ENCODE measurements at regions of chr3 and their contacts with region 1.

Region 1: GRCh38 chr3:194769020-194769643 is 83.4 kb downstream of the FAM43A start:
- DNase-seq: peak; percentile 92

Region 2: GRCh38 chr3:194814878-194815357 is 45.8 kb after region 1 on chr3:
- intact Hi-C with region 1: no loop called
- DNase-seq: no peak

Region 3: DNA sequence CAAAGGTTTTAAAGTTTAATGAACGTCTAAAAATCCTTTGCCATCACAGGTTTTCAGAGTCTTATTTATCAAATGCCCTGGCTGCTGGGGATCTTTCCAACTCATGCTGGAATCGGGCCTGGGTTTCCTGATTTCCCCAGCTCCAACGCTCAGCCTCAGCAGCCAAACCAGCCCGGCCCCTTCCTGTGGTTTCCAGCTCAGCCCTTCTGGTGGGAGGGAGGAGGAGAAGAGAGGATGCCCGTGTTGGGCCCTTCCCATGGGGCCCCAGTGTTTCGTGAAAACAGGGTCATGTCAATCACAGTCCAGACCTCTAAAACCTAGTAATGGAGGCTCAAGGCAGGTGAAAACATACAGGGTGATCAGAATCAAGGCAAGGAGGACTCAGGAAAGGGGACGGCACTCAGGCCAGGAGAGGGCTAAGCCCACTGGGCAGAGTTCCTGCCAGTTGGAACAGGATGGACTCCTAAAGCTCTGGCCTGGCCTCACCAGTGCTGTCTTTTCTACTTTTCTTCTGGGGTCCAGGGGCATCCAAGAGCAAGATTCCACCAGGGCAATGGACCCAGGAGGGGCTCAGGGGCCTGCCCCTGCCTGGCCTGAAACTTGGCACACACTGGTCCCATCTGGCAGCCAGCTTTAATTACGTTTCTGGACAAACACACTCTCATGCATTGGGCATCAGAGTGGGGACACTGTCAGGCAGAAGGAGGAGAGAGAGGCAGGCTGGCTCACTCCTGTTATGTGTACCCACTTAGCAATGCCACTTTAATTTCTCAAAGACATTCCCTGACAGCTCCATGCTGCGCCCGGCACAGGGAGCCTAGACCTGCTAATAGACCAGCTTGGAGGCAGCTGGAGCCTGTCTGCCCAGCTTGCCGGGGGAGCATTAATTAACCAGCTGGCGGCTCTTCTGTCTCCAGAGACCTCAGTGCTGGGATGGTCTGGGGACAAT is 111.1 kb after region 1 on chr3:
- intact Hi-C with region 1: loop called (anchors 5 kb)
- DNase-seq: peak; percentile 86

Measured in cardiac septum (tissue), 1 donor.